ENCODE measurements at regions of chr19 and their contacts with region 1.

Region 1: GRCh38 chr19:43754503-43755255 is at the start of gene SMG9:
- DNase-seq: peak; percentile 98
- H3K4me3 ChIP-seq: peak within 1 kb of the TSS; percentile 98
- H3K27ac ChIP-seq: peak within 1 kb of the TSS; percentile 98
- H3K4me1 ChIP-seq: peaks cover 57% of the 10 kb centered on the region
- CTCF ChIP-seq: no peak
- total RNA-seq, gene SMG9: 49.1 and 65.6 TPM in 2 replicates

Region 2: GRCh38 chr19:43765109-43765876 is 10.6 kb after region 1 on chr19:
- CTCF ChIA-PET with region 1: no interaction called
- POLR2A ChIA-PET with region 1: interaction called, 17 read pairs
- intact Hi-C with region 1: loop called (anchors 1 kb)
- DNase-seq: peak; percentile 88
- H3K4me3 ChIP-seq: peak overlapping the region; percentile 56
- H3K27ac ChIP-seq: peak overlapping the region; percentile 96
- H3K4me1 ChIP-seq: peaks cover 74% of the 10 kb centered on the region
- CTCF ChIP-seq: no peak

Region 3: GRCh38 chr19:43777163-43777700 is 22.6 kb after region 1 on chr19:
- CTCF ChIA-PET with region 1: interaction called, 3 read pairs
- POLR2A ChIA-PET with region 1: interaction called, 27 read pairs
- intact Hi-C with region 1: no loop called
- DNase-seq: peak; percentile 82
- H3K4me3 ChIP-seq: peak overlapping the region; percentile 78
- H3K27ac ChIP-seq: peak overlapping the region; percentile 91
- H3K4me1 ChIP-seq: peaks cover 68% of the 10 kb centered on the region
- CTCF ChIP-seq: no peak

Region 4: GRCh38 chr19:43784981-43785808 is 30.5 kb after region 1 on chr19:
- CTCF ChIA-PET with region 1: no interaction called
- POLR2A ChIA-PET with region 1: interaction called, 27 read pairs
- intact Hi-C with region 1: no loop called
- DNase-seq: peak; percentile 86
- H3K4me3 ChIP-seq: peak overlapping the region; percentile 56
- H3K27ac ChIP-seq: peak overlapping the region; percentile 98
- H3K4me1 ChIP-seq: peaks cover 53% of the 10 kb centered on the region
- CTCF ChIP-seq: peak; percentile 97

Measured in OCI-LY7 (cell line).